IMR-90 (cell line): ENCODE measurements at regions of chr21 and their contacts with region 1.

Region 1: GRCh38 chr21:33419538-33420123 is 16.4 kb downstream of the IFNGR2 start:
- DNase-seq: peak; percentile 76
- ATAC-seq: peak; percentile 81
- H3K4me3 ChIP-seq: no peak overlapping the region
- H3K27ac ChIP-seq: no peak overlapping the region
- H3K4me1 ChIP-seq: peaks cover 6% of the 10 kb centered on the region
- H3K27me3 ChIP-seq: no peaks in the 10 kb centered on the region
- CTCF ChIP-seq: no peak
- POLR2A ChIP-seq: no peak
- RAD21 ChIP-seq: no peak

Region 2: DNA sequence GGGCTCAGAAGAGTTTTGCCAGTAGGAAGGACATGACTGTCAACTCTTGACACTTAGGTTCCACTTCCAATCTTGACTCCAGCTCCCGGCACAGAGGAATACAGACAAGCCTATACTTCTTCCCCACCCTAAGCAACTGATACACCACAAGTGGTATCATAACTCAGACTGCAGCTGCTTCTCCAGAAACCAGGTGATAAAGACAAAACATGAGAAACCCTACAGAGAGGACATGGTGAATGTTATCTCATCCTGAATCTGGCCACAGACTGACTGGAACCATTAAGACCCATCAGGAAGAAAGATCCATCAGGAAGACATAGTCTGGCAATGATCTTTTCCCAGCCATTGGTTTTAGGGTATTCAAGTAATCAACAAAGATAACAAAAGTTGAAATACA is 661.8 kb before region 1 on chr21:
- CTCF ChIA-PET with region 1: no interaction called
- POLR2A ChIA-PET with region 1: no interaction called
- dilution Hi-C with region 1: no loop called
- in situ Hi-C with region 1: no loop called
- intact Hi-C with region 1: no loop called
- DNase-seq: no peak
- ATAC-seq: no peak
- H3K4me3 ChIP-seq: no peak overlapping the region
- H3K27ac ChIP-seq: no peak overlapping the region
- H3K4me1 ChIP-seq: no peaks in the 10 kb centered on the region
- H3K27me3 ChIP-seq: no peaks in the 10 kb centered on the region
- CTCF ChIP-seq: no peak
- POLR2A ChIP-seq: no peak
- RAD21 ChIP-seq: no peak

Region 3: DNA sequence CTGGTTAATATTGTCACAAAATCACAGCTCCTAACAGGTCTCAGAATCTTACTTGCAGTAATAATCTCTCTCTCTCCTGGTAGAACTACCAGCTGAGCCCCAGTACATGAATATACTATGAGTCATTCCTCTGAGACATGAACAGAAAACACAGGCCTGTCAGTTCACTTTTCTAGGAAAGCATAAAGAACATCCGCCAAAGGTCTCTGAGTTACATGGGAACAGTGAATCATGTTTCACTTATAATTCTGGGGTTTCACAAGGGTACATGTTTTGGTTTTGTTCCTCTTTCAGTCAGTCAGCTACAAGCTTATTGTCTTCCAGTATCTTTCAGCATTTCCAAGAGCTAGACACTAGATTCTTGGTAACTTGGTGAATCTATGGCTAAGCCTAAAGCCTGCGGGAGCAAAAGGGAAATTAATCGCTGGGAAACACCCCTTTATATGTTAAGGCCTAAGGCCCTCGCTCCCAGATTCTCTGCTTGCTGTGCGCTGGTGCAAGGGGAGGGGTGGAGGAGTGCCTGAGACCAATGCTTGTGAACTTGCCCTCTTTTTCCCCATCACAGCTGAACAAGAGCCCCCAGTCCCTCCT is 15.2 kb after region 1 on chr21:
- CTCF ChIA-PET with region 1: no interaction called
- POLR2A ChIA-PET with region 1: interaction called, 10 read pairs
- dilution Hi-C with region 1: no loop called
- in situ Hi-C with region 1: no loop called
- intact Hi-C with region 1: no loop called
- DNase-seq: peak; percentile 96
- ATAC-seq: peak; percentile 95
- H3K4me3 ChIP-seq: no peak overlapping the region
- H3K27ac ChIP-seq: peak overlapping the region; percentile 74; the same call in 1 of the 2 replicates
- H3K4me1 ChIP-seq: peaks cover 10% of the 10 kb centered on the region
- H3K27me3 ChIP-seq: no peaks in the 10 kb centered on the region
- CTCF ChIP-seq: no peak
- POLR2A ChIP-seq: peak; percentile 43; the same call in 1 of the 2 replicates
- RAD21 ChIP-seq: no peak